ENCODE measurements at regions of chr1 and their contacts with region 1.

Region 1: DNA sequence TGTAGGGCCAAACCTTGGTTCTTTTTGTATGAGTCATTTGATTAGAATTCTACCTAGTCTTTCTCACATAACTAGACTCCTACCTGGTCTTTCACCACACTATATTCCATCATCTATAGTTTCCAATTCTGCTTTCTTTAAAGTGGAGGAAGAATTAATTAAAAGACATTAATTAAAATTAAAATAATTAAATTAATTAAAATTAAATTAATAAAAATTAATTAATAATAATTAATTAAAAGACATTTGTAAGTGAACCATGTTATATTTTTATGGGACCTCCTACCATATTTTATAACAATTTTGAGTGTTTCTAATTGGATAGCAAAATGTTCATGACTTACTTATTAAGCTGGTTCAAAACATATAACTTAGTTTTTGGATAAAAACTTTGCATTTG is 77.4 kb downstream of the CCDC18 start:
- DNase-seq: no peak
- ATAC-seq: no peak
- H3K4me3 ChIP-seq: no peak overlapping the region
- H3K4me3 Mint-ChIP-seq: no peak overlapping the region
- H3K27ac ChIP-seq: no peak overlapping the region
- H3K27ac Mint-ChIP-seq: no peak overlapping the region
- H3K4me1 ChIP-seq: no peaks in the 10 kb centered on the region
- H3K4me1 Mint-ChIP-seq: no peaks in the 10 kb centered on the region
- H3K27me3 ChIP-seq: no peaks in the 10 kb centered on the region
- H3K27me3 Mint-ChIP-seq: no peaks in the 10 kb centered on the region
- CTCF ChIP-seq: no peak

Region 2: GRCh38 chr1:93283496-93283895 is 25.6 kb after region 1 on chr1:
- CTCF ChIA-PET with region 1: no interaction called
- POLR2A ChIA-PET with region 1: interaction called, 3 read pairs
- intact Hi-C with region 1: loop called in 1 of 2 experiments (anchors 1 kb)
- DNase-seq: no peak
- ATAC-seq: no peak
- H3K4me3 ChIP-seq: no peak overlapping the region
- H3K4me3 Mint-ChIP-seq: no peak overlapping the region
- H3K27ac ChIP-seq: no peak overlapping the region
- H3K27ac Mint-ChIP-seq: no peak overlapping the region
- H3K4me1 ChIP-seq: no peaks in the 10 kb centered on the region
- H3K4me1 Mint-ChIP-seq: no peaks in the 10 kb centered on the region
- H3K27me3 ChIP-seq: no peaks in the 10 kb centered on the region
- H3K27me3 Mint-ChIP-seq: no peaks in the 10 kb centered on the region
- CTCF ChIP-seq: no peak